Ascending aorta (tissue), 2 donors: ENCODE measurements at regions of chr10 and their contacts with region 1.

Region 1: GRCh38 chr10:30455816-30456215 is 21.8 kb downstream of the MAP3K8 start:
- DNase-seq: no peak
- H3K4me3 ChIP-seq: peak overlapping the region in 1 of 2 donors; percentile 1
- H3K27ac ChIP-seq: peak overlapping the region; percentile 74 to 87
- H3K4me1 ChIP-seq: peaks cover 15 to 63% of the 10 kb centered on the region in 2 donors
- H3K27me3 ChIP-seq: no peaks in the 10 kb centered on the region
- CTCF ChIP-seq: no peak

Region 2: GRCh38 chr10:30433730-30434272 is 22.0 kb before region 1 on chr10 and contains the start of gene MAP3K8:
- intact Hi-C with region 1: loop called (anchors 1 kb)
- DNase-seq: peak; percentile 84 to 97
- H3K4me3 ChIP-seq: peak within 1 kb of the TSS; percentile 90 to 94
- H3K27ac ChIP-seq: peak within 1 kb of the TSS; percentile 98 to 99
- H3K4me1 ChIP-seq: peaks cover 0 to 10% of the 10 kb centered on the region in 2 donors
- H3K27me3 ChIP-seq: no peaks in the 10 kb centered on the region
- CTCF ChIP-seq: no peak
- total RNA-seq, gene MAP3K8: 15.8 TPM

Region 3: GRCh38 chr10:32367793-32368453 is 1912.1 kb after region 1 on chr10:
- intact Hi-C with region 1: no loop called
- DNase-seq: no peak
- H3K4me3 ChIP-seq: peak overlapping the region in 1 of 2 donors; percentile 24
- H3K27ac ChIP-seq: no peak overlapping the region
- H3K4me1 ChIP-seq: peaks cover 0 to 8% of the 10 kb centered on the region in 2 donors
- H3K27me3 ChIP-seq: no peaks in the 10 kb centered on the region
- CTCF ChIP-seq: peak; percentile 55 to 86 (median 65)